GM12878 (cell line): ENCODE measurements at regions of chr6 and their contacts with region 1.

Region 1: GRCh38 chr6:112879920-112880413 is 532.8 kb downstream of the RFPL4B start:
- DNase-seq: no peak
- ATAC-seq: peak; percentile 98
- H3K4me3 ChIP-seq: no peak overlapping the region
- H3K27ac ChIP-seq: no peak overlapping the region
- H3K4me1 ChIP-seq: no peaks in the 10 kb centered on the region
- H3K27me3 ChIP-seq: no peaks in the 10 kb centered on the region
- CTCF ChIP-seq: peak in 2 of 3 experiments; percentile 31 to 50; a peak in 3 of 6 replicates
- EP300 ChIP-seq: no peak
- POLR2A ChIP-seq: peak; percentile 24; the same call in 1 of the 2 replicates
- RAD21 ChIP-seq: peak; percentile 18; the same call in 1 of the 2 replicates

Region 2: DNA sequence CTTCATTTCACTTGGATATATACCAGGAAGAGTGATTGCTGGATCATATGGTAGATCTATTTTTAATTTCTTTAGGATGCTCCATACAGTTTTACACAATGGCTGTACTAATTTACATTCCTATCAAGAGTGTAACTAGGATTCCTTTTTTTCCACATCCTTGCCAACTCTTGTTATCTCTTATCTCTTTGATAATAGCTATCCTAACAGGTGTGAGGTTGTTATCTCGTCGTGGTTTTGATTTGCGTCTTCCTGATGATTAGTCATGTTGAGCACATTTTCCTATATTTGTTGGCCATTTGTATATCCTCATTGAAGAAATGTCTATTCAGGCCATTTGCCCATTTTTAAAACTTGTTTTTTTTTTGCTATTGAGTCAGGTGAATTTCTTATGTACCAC is 19.6 kb after region 1 on chr6:
- CTCF ChIA-PET with region 1: interaction called, 16 read pairs
- POLR2A ChIA-PET with region 1: no interaction called
- RAD21 ChIA-PET with region 1: interaction called, 4 read pairs
- SMC1A ChIA-PET with region 1: interaction called, 3 read pairs
- in situ Hi-C with region 1: no loop called
- intact Hi-C with region 1: no loop called
- DNase-seq: no peak
- ATAC-seq: no peak
- H3K4me3 ChIP-seq: no peak overlapping the region
- H3K27ac ChIP-seq: no peak overlapping the region
- H3K4me1 ChIP-seq: no peaks in the 10 kb centered on the region
- H3K27me3 ChIP-seq: no peaks in the 10 kb centered on the region
- CTCF ChIP-seq: no peak
- EP300 ChIP-seq: no peak
- POLR2A ChIP-seq: no peak
- RAD21 ChIP-seq: no peak

Region 3: GRCh38 chr6:113065611-113066010 is 185.6 kb after region 1 on chr6:
- CTCF ChIA-PET with region 1: no interaction called
- POLR2A ChIA-PET with region 1: no interaction called
- RAD21 ChIA-PET with region 1: no interaction called
- SMC1A ChIA-PET with region 1: no interaction called
- in situ Hi-C with region 1: no loop called
- intact Hi-C with region 1: no loop called
- DNase-seq: no peak
- ATAC-seq: no peak
- H3K4me3 ChIP-seq: no peak overlapping the region
- H3K27ac ChIP-seq: no peak overlapping the region
- H3K4me1 ChIP-seq: no peaks in the 10 kb centered on the region
- H3K27me3 ChIP-seq: no peaks in the 10 kb centered on the region
- CTCF ChIP-seq: no peak
- EP300 ChIP-seq: no peak
- POLR2A ChIP-seq: no peak
- RAD21 ChIP-seq: no peak

Region 4: DNA sequence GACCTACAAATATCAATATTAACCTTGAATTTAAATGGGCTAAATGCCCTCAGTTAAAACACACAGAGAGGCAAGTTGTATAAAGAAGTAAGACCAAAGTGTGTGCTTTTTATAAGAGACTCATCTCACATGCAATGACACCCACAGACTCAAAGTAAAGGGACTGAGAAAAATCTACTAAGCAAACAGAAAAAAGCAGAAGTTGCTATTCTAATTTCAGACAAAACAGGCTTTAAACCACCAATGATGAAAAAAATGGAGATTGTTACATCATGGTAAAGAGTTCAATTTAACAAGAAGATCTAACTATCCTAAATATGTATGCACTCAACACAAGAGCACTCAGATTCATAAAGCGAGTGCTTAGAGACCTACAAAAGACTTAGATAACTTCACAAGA is 235.2 kb after region 1 on chr6:
- CTCF ChIA-PET with region 1: no interaction called
- POLR2A ChIA-PET with region 1: no interaction called
- RAD21 ChIA-PET with region 1: no interaction called
- SMC1A ChIA-PET with region 1: no interaction called
- in situ Hi-C with region 1: no loop called
- intact Hi-C with region 1: no loop called
- DNase-seq: no peak
- ATAC-seq: no peak
- H3K4me3 ChIP-seq: no peak overlapping the region
- H3K27ac ChIP-seq: no peak overlapping the region
- H3K4me1 ChIP-seq: no peaks in the 10 kb centered on the region
- H3K27me3 ChIP-seq: no peaks in the 10 kb centered on the region
- CTCF ChIP-seq: no peak
- EP300 ChIP-seq: no peak
- POLR2A ChIP-seq: no peak
- RAD21 ChIP-seq: no peak

Region 5: GRCh38 chr6:113873043-113873667 is 993.2 kb after region 1 on chr6:
- CTCF ChIA-PET with region 1: interaction called, 88 read pairs
- POLR2A ChIA-PET with region 1: no interaction called
- RAD21 ChIA-PET with region 1: interaction called, 6 read pairs
- SMC1A ChIA-PET with region 1: interaction called, 28 read pairs
- in situ Hi-C with region 1: no loop called
- intact Hi-C with region 1: loop called (anchors 5 kb)
- DNase-seq: no peak
- ATAC-seq: peak; percentile 89
- H3K4me3 ChIP-seq: peak overlapping the region; percentile 65
- H3K27ac ChIP-seq: no peak overlapping the region; the same call in 1 of the 2 replicates
- H3K4me1 ChIP-seq: peaks cover 7% of the 10 kb centered on the region
- H3K27me3 ChIP-seq: no peaks in the 10 kb centered on the region
- CTCF ChIP-seq: peak in 1 of 3 experiments; percentile 17; a peak in 2 of 6 replicates
- EP300 ChIP-seq: peak; percentile 48 to 67; a peak in 2 of 4 replicates
- POLR2A ChIP-seq: no peak
- RAD21 ChIP-seq: 0 out of 2 replicates have a peak, but pooled peaks have one; percentile 21